CD8-positive, alpha-beta T cell (primary cell): ENCODE measurements at regions of chr10 and their contacts with region 1.

Region 1: DNA sequence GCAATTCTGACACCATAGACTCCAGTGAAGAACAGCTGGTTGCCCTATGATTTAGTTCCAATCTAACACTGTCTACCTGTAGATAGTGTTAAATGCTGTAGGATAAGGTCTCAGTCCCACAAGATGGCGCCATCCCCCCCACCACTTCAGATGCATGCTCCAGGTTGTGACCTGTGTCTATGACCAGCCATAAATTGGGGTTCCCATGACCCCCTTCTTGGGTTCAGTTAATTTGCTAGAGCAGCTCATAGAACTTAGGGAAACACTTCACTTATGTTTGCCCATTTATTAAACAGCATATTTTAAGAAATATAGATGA is 13.1 kb downstream of the CCSER2 start:
- DNase-seq: peak in 2 of 9 experiments; percentile 32 to 42
- ATAC-seq: no peak
- H3K4me3 ChIP-seq: no peak overlapping the region
- H3K4me3 Mint-ChIP-seq: peak overlapping the region; percentile 24
- H3K27ac ChIP-seq: no peak overlapping the region
- H3K27ac Mint-ChIP-seq: peak overlapping the region; percentile 73
- H3K4me1 ChIP-seq: peaks cover 63% of the 10 kb centered on the region
- H3K4me1 Mint-ChIP-seq: peaks cover 64% of the 10 kb centered on the region
- H3K27me3 ChIP-seq: no peaks in the 10 kb centered on the region
- H3K27me3 Mint-ChIP-seq: no peaks in the 10 kb centered on the region
- CTCF ChIP-seq: no peak

Region 2: GRCh38 chr10:84308481-84309304 is 32.8 kb before region 1 on chr10:
- CTCF ChIA-PET with region 1: interaction called, 3 read pairs
- POLR2A ChIA-PET with region 1: no interaction called
- intact Hi-C with region 1: loop called in 1 of 2 experiments (anchors 5 kb)
- DNase-seq: peak in 6 of 9 experiments; percentile 9 to 61 (median 40)
- ATAC-seq: peak; percentile 38
- H3K4me3 ChIP-seq: no peak overlapping the region
- H3K4me3 Mint-ChIP-seq: no peak overlapping the region
- H3K27ac ChIP-seq: no peak overlapping the region
- H3K27ac Mint-ChIP-seq: peak overlapping the region; percentile 0
- H3K4me1 ChIP-seq: peaks cover 12% of the 10 kb centered on the region
- H3K4me1 Mint-ChIP-seq: peaks cover 15% of the 10 kb centered on the region
- H3K27me3 ChIP-seq: peaks cover 0 to 3% of the 10 kb centered on the region in 2 experiments
- H3K27me3 Mint-ChIP-seq: no peaks in the 10 kb centered on the region
- CTCF ChIP-seq: no peak

Region 3: DNA sequence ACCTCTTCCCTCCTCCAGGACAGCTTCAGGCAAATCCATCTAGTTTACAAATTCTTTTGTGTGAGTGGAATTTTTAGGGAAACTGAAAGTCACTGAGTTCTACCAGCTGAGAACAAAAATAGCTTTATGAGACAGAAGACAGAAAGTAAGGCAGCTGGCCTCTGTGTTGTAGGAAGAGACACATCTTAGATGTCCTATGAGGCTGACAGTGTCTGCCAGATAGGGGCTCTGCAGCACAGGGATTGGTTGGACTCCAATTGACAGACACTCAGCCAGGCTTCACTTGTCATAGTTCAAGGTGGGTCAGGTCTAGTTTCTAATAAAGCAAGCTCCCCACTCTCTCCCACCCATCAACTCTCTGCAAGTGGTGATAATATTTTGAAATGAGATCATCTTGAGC is 561.8 kb after region 1 on chr10:
- CTCF ChIA-PET with region 1: no interaction called
- POLR2A ChIA-PET with region 1: no interaction called
- intact Hi-C with region 1: no loop called
- DNase-seq: no peak
- ATAC-seq: no peak
- H3K4me3 ChIP-seq: no peak overlapping the region
- H3K4me3 Mint-ChIP-seq: no peak overlapping the region
- H3K27ac ChIP-seq: no peak overlapping the region
- H3K27ac Mint-ChIP-seq: no peak overlapping the region
- H3K4me1 ChIP-seq: no peaks in the 10 kb centered on the region
- H3K4me1 Mint-ChIP-seq: no peaks in the 10 kb centered on the region
- H3K27me3 ChIP-seq: no peaks in the 10 kb centered on the region
- H3K27me3 Mint-ChIP-seq: peaks cover 2% of the 10 kb centered on the region
- CTCF ChIP-seq: no peak